ENCODE measurements at regions of chr2 and their contacts with region 1.

Region 1: GRCh38 chr2:406876-407275 is 119.0 kb upstream of the ALKAL2 start:
- DNase-seq: no peak
- H3K4me3 ChIP-seq: no peak overlapping the region
- H3K27ac ChIP-seq: no peak overlapping the region
- H3K4me1 ChIP-seq: no peaks in the 10 kb centered on the region
- H3K27me3 ChIP-seq: no peaks in the 10 kb centered on the region
- CTCF ChIP-seq: no peak

Region 2: DNA sequence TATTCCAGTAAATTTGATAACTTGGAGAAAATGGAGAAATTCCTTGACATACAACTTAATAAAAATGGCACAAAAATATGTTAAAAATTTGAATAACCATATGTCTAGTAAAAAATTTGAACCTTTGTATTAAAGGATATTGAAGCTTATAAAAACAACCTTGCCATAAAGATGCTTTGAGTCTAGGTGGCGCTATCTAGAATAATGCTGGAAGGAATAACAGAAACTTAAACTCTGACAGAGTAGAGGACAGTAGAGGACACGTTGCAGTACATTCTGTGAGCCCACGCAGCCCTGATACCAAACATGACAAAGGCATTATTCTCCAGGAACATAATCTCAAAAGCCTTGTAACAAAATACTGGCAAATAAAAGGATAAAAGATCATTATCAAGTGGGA is 74.3 kb before region 1 on chr2:
- CTCF ChIA-PET with region 1: no interaction called
- dilution Hi-C with region 1: no loop called
- in situ Hi-C with region 1: no loop called
- intact Hi-C with region 1: no loop called
- DNase-seq: no peak
- H3K4me3 ChIP-seq: no peak overlapping the region
- H3K27ac ChIP-seq: no peak overlapping the region
- H3K4me1 ChIP-seq: no peaks in the 10 kb centered on the region
- H3K27me3 ChIP-seq: no peaks in the 10 kb centered on the region
- CTCF ChIP-seq: peak in 1 of 2 donors; percentile 13

Region 3: DNA sequence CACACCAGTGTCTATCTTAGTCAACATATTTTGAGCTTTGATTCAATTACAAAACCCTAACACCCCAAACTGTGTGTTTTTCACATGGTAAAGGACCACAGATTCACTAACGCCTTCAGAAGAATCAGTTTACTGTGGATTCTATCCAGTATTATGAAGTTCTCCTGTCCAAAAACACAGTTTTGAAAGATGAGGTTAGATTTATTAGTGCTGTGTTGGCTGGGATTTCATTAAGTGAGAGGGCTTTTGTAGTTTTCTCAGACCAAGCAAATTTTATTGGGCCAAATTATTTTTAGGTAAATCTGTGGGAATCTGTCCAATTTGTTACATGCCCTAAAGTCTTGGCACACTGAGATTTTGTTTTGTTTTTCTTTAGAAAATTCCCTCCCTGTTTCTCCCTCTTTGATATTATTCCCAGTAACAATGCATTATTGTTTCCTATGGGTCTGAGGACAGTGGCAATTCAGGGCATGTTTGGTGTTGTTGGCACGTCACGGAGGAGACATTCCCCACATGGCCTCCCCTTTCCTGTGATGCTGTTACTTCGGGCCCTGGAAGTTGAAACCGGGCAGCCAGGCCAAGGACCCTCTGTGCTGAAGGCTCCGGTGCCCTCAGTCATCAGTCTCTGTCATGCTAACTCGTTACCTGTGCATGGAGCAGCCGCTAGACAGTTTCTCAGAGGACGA is 31.5 kb before region 1 on chr2:
- CTCF ChIA-PET with region 1: no interaction called
- dilution Hi-C with region 1: loop called (anchors 5 kb)
- in situ Hi-C with region 1: no loop called
- intact Hi-C with region 1: no loop called
- DNase-seq: no peak
- H3K4me3 ChIP-seq: no peak overlapping the region
- H3K27ac ChIP-seq: no peak overlapping the region
- H3K4me1 ChIP-seq: no peaks in the 10 kb centered on the region
- H3K27me3 ChIP-seq: no peaks in the 10 kb centered on the region
- CTCF ChIP-seq: no peak

Region 4: GRCh38 chr2:455015-455705 is 48.3 kb after region 1 on chr2:
- CTCF ChIA-PET with region 1: no interaction called
- dilution Hi-C with region 1: loop called (anchors 5 kb)
- in situ Hi-C with region 1: no loop called
- intact Hi-C with region 1: no loop called
- DNase-seq: no peak
- H3K4me3 ChIP-seq: no peak overlapping the region
- H3K27ac ChIP-seq: no peak overlapping the region
- H3K4me1 ChIP-seq: no peaks in the 10 kb centered on the region
- H3K27me3 ChIP-seq: no peaks in the 10 kb centered on the region
- CTCF ChIP-seq: no peak